ENCODE measurements at regions of chr9 and their contacts with region 1.

Region 1: GRCh38 chr9:113275157-113276131 is at the starts of genes CDC26 and PRPF4:
- DNase-seq: peak; percentile 98
- ATAC-seq: peak; percentile 98
- H3K4me3 ChIP-seq: peak within 1 kb of the TSS; percentile 64 to 97
- H3K27ac ChIP-seq: peak within 1 kb of the TSS; percentile 47 to 82
- H3K4me1 ChIP-seq: peaks cover 2 to 4% of the 10 kb centered on the region in 2 donors
- H3K27me3 ChIP-seq: no peaks in the 10 kb centered on the region
- total RNA-seq, gene CDC26: 23.1 to 23.8 TPM
- total RNA-seq, gene PRPF4: 12.8 to 12.9 TPM

Region 2: DNA sequence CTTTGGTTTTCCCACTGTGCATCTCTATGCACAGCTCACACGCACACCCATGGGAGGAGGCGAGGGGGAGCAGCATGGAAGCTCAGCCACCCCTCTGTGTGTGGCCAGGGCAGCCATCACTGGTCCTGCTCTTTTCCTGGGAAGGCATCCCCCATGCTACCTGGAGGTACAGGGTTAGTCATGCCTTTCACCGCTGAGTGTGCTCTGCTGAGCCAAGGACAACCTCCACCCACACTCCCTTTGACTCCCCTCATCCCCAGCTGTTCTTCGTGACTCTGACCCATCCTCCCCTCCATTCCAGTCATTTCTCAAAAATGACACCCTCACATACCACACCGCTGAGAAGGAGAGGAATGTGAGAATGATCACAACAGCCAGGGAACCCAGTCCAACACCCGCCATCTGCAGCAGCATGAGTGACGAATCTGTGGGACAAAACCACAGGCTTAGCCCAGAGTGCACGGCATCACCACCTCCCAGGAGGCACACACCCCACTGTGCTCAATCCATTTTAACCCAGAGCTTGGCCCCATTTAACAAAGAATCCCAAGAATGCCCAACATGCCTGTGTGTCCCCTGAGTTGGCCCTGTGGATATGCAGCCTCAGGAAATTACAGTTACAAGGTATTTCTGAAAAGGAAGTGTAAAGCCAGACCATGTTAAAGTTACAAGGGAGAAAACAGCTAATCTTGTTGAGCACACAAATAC is 1233.8 kb before region 1 on chr9:
- intact Hi-C with region 1: no loop called
- DNase-seq: peak in 1 of 2 donors; percentile 69
- ATAC-seq: peak; percentile 38
- H3K4me3 ChIP-seq: no peak overlapping the region
- H3K27ac ChIP-seq: no peak overlapping the region
- H3K4me1 ChIP-seq: no peaks in the 10 kb centered on the region
- H3K27me3 ChIP-seq: no peaks in the 10 kb centered on the region

Region 3: GRCh38 chr9:113221003-113221799 is 54.2 kb before region 1 on chr9 and contains the starts of genes FKBP15 and SLC31A1:
- intact Hi-C with region 1: loop called in 1 of 2 experiments (anchors 2 kb)
- DNase-seq: peak; percentile 99
- ATAC-seq: peak; percentile 100
- H3K4me3 ChIP-seq: peak within 1 kb of the TSS; percentile 76 to 82
- H3K27ac ChIP-seq: peak within 1 kb of the TSS in 1 of 2 donors; percentile 55
- H3K4me1 ChIP-seq: peaks cover 0 to 13% of the 10 kb centered on the region in 2 donors
- H3K27me3 ChIP-seq: no peaks in the 10 kb centered on the region
- total RNA-seq, gene FKBP15: 26.4 to 48.3 TPM
- total RNA-seq, gene SLC31A1: 16.6 to 17.1 TPM

Region 4: GRCh38 chr9:113340017-113340699 is 64.7 kb after region 1 on chr9 and contains the start of gene WDR31:
- intact Hi-C with region 1: loop called in 1 of 2 experiments (anchors 2 kb)
- DNase-seq: peak; percentile 91 to 95
- ATAC-seq: peak; percentile 95
- H3K4me3 ChIP-seq: peak within 1 kb of the TSS; percentile 38 to 50
- H3K27ac ChIP-seq: no peak within 1 kb of the TSS
- H3K4me1 ChIP-seq: peaks cover 0 to 2% of the 10 kb centered on the region in 2 donors
- H3K27me3 ChIP-seq: no peaks in the 10 kb centered on the region
- total RNA-seq, gene WDR31: 1.1 to 2.1 TPM

Region 5: DNA sequence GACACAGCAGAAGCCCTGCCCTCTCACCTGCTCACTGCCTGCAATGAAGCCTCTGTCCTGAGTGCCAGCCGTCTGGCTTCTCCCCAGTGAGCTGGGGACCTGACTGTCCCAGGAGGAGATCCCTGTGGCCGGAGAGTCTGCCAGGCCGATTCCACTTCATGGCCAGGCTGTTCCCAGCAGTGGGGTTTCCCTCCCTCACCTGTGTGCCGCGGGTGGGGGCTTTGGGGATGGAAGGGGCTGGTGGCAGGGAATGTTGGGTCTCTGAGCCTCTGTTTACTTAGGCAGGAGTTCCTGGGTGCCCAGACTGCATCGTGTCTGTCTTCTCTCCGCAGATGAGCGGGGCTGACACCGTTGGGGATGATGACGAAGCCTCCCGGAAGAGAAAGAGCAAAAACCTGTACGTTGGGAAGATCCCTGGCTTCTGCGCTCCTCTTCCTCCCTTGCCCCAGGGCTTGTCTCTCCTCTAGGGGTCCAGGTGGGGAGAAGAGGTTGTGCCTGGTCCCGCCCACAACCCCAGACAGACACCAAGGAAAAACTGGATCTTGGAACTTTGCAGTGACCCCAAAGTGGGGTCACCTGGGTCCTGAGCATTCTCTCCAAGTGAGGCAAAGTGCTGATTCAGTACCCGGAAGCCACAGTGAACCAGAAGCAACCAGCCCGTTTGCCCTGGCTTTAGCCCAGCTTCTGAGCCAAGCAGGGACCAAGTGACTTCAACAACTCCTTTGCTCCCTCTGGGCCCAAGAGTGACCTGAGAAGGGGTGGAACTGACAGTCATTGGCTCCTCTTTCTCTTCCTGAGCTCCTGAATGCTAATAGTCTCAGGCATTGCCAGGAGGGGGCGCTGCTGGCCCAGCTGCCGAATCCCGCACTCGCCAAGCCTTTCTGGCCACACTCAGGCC is 315.8 kb after region 1 on chr9:
- intact Hi-C with region 1: loop called in 1 of 2 experiments (anchors 10 kb)
- DNase-seq: peak; percentile 84 to 94
- ATAC-seq: peak; percentile 50
- H3K4me3 ChIP-seq: no peak overlapping the region
- H3K27ac ChIP-seq: peak overlapping the region; percentile 15 to 28
- H3K4me1 ChIP-seq: no peaks in the 10 kb centered on the region
- H3K27me3 ChIP-seq: no peaks in the 10 kb centered on the region

Region 6: GRCh38 chr9:113657703-113658544 is 382.5 kb after region 1 on chr9:
- intact Hi-C with region 1: loop called (anchors 5 to 10 kb)
- DNase-seq: peak; percentile 91 to 94
- ATAC-seq: peak; percentile 84
- H3K4me3 ChIP-seq: no peak overlapping the region
- H3K27ac ChIP-seq: no peak overlapping the region
- H3K4me1 ChIP-seq: no peaks in the 10 kb centered on the region
- H3K27me3 ChIP-seq: no peaks in the 10 kb centered on the region

Measured in aorta (tissue), 5 donors.